ENCODE measurements at regions of chr14 and their contacts with region 1.

Region 1: GRCh38 chr14:72420725-72421474 is 473.0 kb downstream of the DPF3 start:
- DNase-seq: peak; percentile 78
- H3K4me3 ChIP-seq: no peak overlapping the region
- H3K27ac ChIP-seq: no peak overlapping the region
- H3K4me1 ChIP-seq: no peaks in the 10 kb centered on the region
- H3K27me3 ChIP-seq: no peaks in the 10 kb centered on the region
- CTCF ChIP-seq: peak in 3 of 4 experiments; percentile 48 to 83 (median 62)
- EP300 ChIP-seq: no peak
- POLR2A ChIP-seq: no peak

Region 2: GRCh38 chr14:72291908-72292688 is 128.8 kb before region 1 on chr14:
- intact Hi-C with region 1: loop called (anchors 5 kb)
- DNase-seq: no peak
- H3K4me3 ChIP-seq: no peak overlapping the region
- H3K27ac ChIP-seq: no peak overlapping the region
- H3K4me1 ChIP-seq: no peaks in the 10 kb centered on the region
- H3K27me3 ChIP-seq: no peaks in the 10 kb centered on the region
- CTCF ChIP-seq: peak in 3 of 4 experiments; percentile 24 to 60 (median 50)
- EP300 ChIP-seq: no peak
- POLR2A ChIP-seq: no peak

Region 3: GRCh38 chr14:72366619-72367018 is 54.3 kb before region 1 on chr14:
- intact Hi-C with region 1: no loop called
- DNase-seq: no peak
- H3K4me3 ChIP-seq: no peak overlapping the region
- H3K27ac ChIP-seq: no peak overlapping the region
- H3K4me1 ChIP-seq: no peaks in the 10 kb centered on the region
- H3K27me3 ChIP-seq: no peaks in the 10 kb centered on the region
- CTCF ChIP-seq: no peak
- EP300 ChIP-seq: no peak
- POLR2A ChIP-seq: no peak